A673 (cell line): ENCODE measurements at regions of chr16 and their contacts with region 1.

Region 1: GRCh38 chr16:67555795-67556212 is 6.5 kb upstream of the CTCF start:
- DNase-seq: peak; percentile 65
- H3K4me3 ChIP-seq: no peak overlapping the region
- H3K27ac ChIP-seq: peak overlapping the region; percentile 6
- H3K4me1 ChIP-seq: peaks cover 5% of the 10 kb centered on the region
- H3K27me3 ChIP-seq: no peaks in the 10 kb centered on the region
- CTCF ChIP-seq: no peak

Region 2: GRCh38 chr16:67000384-67001351 is 555.1 kb before region 1 on chr16:
- CTCF ChIA-PET with region 1: no interaction called
- POLR2A ChIA-PET with region 1: no interaction called
- intact Hi-C with region 1: no loop called
- DNase-seq: peak; percentile 57
- H3K4me3 ChIP-seq: peak overlapping the region; percentile 41
- H3K27ac ChIP-seq: no peak overlapping the region
- H3K4me1 ChIP-seq: no peaks in the 10 kb centered on the region
- H3K27me3 ChIP-seq: no peaks in the 10 kb centered on the region
- CTCF ChIP-seq: no peak

Region 3: GRCh38 chr16:67456391-67457081 is 99.3 kb before region 1 on chr16:
- CTCF ChIA-PET with region 1: no interaction called
- POLR2A ChIA-PET with region 1: no interaction called
- intact Hi-C with region 1: no loop called
- DNase-seq: peak; percentile 33
- H3K4me3 ChIP-seq: no peak overlapping the region
- H3K27ac ChIP-seq: no peak overlapping the region
- H3K4me1 ChIP-seq: peaks cover 4% of the 10 kb centered on the region
- H3K27me3 ChIP-seq: no peaks in the 10 kb centered on the region
- CTCF ChIP-seq: peak; percentile 57

Region 4: DNA sequence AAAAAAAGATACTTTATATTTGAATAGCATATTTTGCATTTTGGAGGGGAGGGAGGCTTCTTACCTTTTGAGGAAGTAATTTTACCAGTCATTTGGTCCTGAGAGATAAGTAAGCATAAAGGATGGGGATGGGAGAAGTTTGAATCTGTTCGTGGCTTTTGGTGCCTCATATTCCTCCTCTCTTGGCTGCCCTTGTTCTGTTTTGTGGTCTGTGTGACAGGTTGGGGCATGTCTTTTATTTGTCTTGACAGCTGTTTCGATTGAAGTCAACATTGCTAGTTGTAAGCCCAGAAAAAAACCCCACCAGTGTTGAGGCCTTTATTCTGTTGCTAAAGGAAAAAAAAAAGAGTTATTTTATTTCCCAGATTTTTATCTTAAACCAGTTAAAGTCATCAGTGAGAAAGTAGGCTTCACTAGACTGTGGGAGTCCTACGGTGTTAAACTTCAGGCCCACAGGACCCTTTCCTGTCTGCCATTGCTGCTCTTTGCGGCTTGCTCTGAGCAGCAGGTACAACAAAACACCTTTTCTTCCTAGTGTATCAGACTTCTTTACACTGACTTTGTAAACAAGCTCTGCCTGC is 719.9 kb after region 1 on chr16:
- CTCF ChIA-PET with region 1: no interaction called
- POLR2A ChIA-PET with region 1: interaction called, 10 read pairs
- intact Hi-C with region 1: no loop called
- DNase-seq: no peak
- H3K4me3 ChIP-seq: no peak overlapping the region
- H3K27ac ChIP-seq: no peak overlapping the region
- H3K4me1 ChIP-seq: no peaks in the 10 kb centered on the region
- H3K27me3 ChIP-seq: no peaks in the 10 kb centered on the region
- CTCF ChIP-seq: no peak

Region 5: DNA sequence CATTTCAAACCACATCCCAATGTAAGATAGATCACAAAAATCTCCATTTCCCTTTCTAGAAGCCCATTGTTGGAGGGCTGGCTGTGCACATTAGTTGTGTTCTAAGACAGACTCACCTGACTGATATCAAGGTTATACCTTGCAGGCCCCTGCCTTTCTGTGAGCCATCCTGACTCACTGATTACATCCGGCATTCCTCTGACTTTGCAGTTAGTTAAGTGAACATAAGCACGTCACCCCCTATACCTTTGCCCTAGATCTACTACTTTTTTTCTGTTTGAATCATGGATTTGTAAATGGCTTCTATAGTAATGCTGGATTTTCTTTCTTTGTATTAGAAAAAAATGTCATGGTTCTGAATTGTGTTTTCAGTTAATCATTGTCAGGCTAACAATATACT is 1365.8 kb after region 1 on chr16:
- CTCF ChIA-PET with region 1: no interaction called
- POLR2A ChIA-PET with region 1: no interaction called
- intact Hi-C with region 1: no loop called
- DNase-seq: no peak
- H3K4me3 ChIP-seq: no peak overlapping the region
- H3K27ac ChIP-seq: no peak overlapping the region
- H3K4me1 ChIP-seq: no peaks in the 10 kb centered on the region
- H3K27me3 ChIP-seq: no peaks in the 10 kb centered on the region
- CTCF ChIP-seq: no peak